Activated CD8-positive, alpha-beta memory T cell treated with anti-CD3 and anti-CD28 coated beads, Interleukin-2, amount 10 ng/mL, durations not matched to agents 7 days and 5 days (primary cell): ENCODE measurements at regions of chr12 and their contacts with region 1.

Region 1: GRCh38 chr12:44875954-44876553 is at the start of gene NELL2:
- DNase-seq: peak; percentile 78
- ATAC-seq: peak; percentile 82
- H3K4me3 Mint-ChIP-seq: peak within 1 kb of the TSS; percentile 90
- H3K27ac Mint-ChIP-seq: peak within 1 kb of the TSS; percentile 75
- H3K4me1 Mint-ChIP-seq: peaks cover 34% of the 10 kb centered on the region
- H3K27me3 Mint-ChIP-seq: peaks cover 21% of the 10 kb centered on the region
- total RNA-seq, gene NELL2: 22.7 to 76.9 TPM

Region 2: GRCh38 chr12:44774815-44775411 is 101.1 kb before region 1 on chr12:
- CTCF ChIA-PET with region 1: interaction called, 13 read pairs
- DNase-seq: peak; percentile 56
- ATAC-seq: no peak
- H3K4me3 Mint-ChIP-seq: no peak overlapping the region
- H3K27ac Mint-ChIP-seq: no peak overlapping the region
- H3K4me1 Mint-ChIP-seq: no peaks in the 10 kb centered on the region
- H3K27me3 Mint-ChIP-seq: no peaks in the 10 kb centered on the region

Region 3: DNA sequence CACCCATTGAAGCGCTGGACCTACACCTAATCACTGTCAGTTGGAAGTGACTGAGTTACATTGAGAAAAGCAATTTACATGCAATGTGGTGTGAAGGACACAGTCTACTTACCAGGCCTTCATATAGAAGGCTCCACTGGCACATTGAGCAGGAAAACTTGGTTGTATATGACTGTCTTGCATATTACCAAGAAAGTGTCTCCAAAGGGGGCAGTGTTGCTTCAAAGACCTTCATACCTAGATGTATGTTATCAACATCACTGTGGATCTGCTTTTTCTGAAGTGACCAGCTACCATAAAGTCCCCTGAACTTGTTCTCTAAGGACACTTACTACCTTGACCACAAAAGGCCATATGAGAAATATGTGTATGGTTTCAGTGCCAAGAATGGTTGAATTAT is 64.0 kb before region 1 on chr12:
- CTCF ChIA-PET with region 1: interaction called, 161 read pairs
- DNase-seq: peak; percentile 65
- ATAC-seq: peak; percentile 92
- H3K4me3 Mint-ChIP-seq: no peak overlapping the region
- H3K27ac Mint-ChIP-seq: no peak overlapping the region
- H3K4me1 Mint-ChIP-seq: peaks cover 20% of the 10 kb centered on the region
- H3K27me3 Mint-ChIP-seq: no peaks in the 10 kb centered on the region

Region 4: DNA sequence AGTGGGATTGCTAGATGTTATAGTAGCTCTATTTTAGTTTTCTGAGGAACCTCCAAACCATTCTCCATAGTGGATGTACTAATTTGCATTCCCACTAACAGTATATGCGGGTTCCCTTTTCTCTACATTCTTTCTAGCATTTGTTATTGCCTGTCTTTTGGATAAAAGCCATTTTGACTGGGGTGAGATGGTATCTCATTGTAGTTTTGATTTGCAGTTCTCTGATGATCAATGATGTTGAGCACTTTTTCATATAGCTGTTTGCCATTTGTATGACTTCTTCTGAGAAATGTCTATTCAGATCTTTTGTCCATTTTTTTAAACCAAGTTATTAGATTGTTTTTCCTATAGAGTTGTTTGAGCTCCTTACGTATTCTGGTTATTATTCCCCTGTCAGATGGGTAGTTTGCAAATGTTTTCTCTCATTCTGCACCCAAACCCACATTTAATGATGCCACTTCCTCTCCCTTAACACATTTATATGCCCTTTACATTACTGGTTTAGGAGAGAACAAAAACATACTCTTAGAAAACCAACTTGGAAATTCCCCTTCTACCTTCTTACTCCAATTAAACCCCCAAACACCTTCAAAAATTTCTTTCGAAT is 48.1 kb before region 1 on chr12:
- CTCF ChIA-PET with region 1: interaction called, 21 read pairs
- DNase-seq: no peak
- ATAC-seq: peak; percentile 71
- H3K4me3 Mint-ChIP-seq: peak overlapping the region; percentile 56
- H3K27ac Mint-ChIP-seq: peak overlapping the region; percentile 87
- H3K4me1 Mint-ChIP-seq: peaks cover 52% of the 10 kb centered on the region
- H3K27me3 Mint-ChIP-seq: no peaks in the 10 kb centered on the region

Region 5: GRCh38 chr12:44847888-44848702 is 28.0 kb before region 1 on chr12:
- CTCF ChIA-PET with region 1: interaction called, 16 read pairs
- DNase-seq: peak; percentile 87
- ATAC-seq: peak; percentile 85
- H3K4me3 Mint-ChIP-seq: peak overlapping the region; percentile 67
- H3K27ac Mint-ChIP-seq: peak overlapping the region; percentile 94
- H3K4me1 Mint-ChIP-seq: peaks cover 75% of the 10 kb centered on the region
- H3K27me3 Mint-ChIP-seq: no peaks in the 10 kb centered on the region